CD14-positive monocyte (primary cell): ENCODE measurements at regions of chr17 and their contacts with region 1.

Region 1: DNA sequence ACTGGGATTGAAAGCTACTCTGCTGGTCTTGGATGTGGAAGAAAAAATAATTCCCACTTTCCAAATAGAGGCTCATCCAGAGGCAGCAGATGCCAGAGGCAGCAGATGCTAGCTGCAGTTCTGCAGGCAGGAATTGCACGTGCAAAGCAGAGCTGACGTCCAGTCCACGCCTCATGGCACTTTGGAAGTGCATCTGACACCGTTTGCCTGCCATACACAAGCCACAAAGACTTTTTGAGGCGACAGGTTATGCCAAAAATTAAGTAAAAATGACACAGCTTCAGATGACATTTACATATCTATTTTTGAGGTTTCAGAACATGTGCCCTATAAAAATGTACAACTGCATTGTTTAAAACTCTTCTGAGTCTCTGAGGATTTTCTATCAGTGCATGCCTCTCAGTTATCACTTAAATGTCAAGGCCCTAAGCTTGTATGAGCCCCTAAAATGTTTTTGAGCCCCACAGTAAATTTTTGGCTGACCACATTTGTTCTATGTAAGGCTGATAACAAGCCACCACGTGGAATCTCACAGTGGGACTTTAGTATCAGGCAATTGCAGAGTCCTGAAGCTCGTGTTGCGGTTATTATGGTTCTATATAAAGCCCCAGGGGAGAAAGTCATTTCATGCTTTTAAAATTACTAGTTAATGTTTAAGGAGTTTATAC is 239.2 kb downstream of the PRKCA start:
- DNase-seq: no peak
- H3K4me3 ChIP-seq: no peak overlapping the region
- H3K4me3 Mint-ChIP-seq: no peak overlapping the region
- H3K27ac ChIP-seq: no peak overlapping the region
- H3K27ac Mint-ChIP-seq: no peak overlapping the region
- H3K4me1 ChIP-seq: peaks cover 0 to 9% of the 10 kb centered on the region in 2 donors
- H3K4me1 Mint-ChIP-seq: peaks cover 27% of the 10 kb centered on the region
- H3K27me3 ChIP-seq: no peaks in the 10 kb centered on the region
- H3K27me3 Mint-ChIP-seq: peaks cover 0 to 1% (median 0%) of the 10 kb centered on the region in 3 donors
- CTCF ChIP-seq: no peak

Region 2: DNA sequence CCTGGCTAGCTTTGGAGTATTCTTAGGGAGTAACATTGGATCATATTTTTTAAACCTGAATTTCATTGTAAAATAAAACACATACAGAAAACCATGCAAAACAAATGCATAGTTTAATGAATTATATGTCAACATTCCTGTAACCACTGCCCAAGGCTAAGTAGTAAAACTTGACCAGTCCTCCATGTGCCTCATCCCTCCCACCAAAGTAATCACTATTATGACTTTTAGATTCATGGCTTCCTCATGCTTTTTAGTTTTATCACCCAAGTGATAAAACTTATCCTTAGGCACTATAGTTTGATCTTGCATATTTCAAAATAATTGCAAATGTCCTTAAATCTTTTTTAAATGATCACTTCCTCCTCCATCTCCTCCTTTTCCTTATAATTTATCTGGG is 218.8 kb before region 1 on chr17:
- intact Hi-C with region 1: loop called in 1 of 2 experiments (anchors 10 kb)
- DNase-seq: no peak
- H3K4me3 ChIP-seq: no peak overlapping the region
- H3K4me3 Mint-ChIP-seq: no peak overlapping the region
- H3K27ac ChIP-seq: no peak overlapping the region
- H3K27ac Mint-ChIP-seq: no peak overlapping the region
- H3K4me1 ChIP-seq: no peaks in the 10 kb centered on the region
- H3K4me1 Mint-ChIP-seq: peaks cover 2% of the 10 kb centered on the region
- H3K27me3 ChIP-seq: no peaks in the 10 kb centered on the region
- H3K27me3 Mint-ChIP-seq: no peaks in the 10 kb centered on the region
- CTCF ChIP-seq: no peak

Region 3: DNA sequence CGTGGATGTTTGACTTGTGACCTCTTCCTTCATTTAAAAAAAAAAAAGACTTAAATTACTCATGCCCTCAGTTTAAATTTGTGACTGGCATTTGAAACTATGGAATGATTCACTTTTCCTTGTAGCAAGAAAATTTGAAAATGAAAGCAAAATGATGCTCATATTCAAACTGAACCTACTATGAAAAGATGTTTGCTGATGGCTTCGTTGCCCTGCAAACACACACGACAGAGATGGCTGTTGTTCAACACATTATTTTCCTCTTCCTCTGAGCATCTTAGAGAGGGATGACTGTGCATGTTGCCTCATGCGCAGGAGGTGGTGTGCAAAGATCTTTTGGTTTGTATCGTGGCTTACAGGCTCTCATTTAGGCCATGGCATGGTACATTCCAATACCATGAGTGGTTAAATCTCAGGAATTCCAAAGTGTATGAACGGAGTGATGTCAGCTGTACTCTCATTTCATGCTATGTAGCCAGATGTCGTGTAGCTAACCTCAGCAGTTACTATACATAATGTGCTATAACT is 74.7 kb before region 1 on chr17:
- intact Hi-C with region 1: no loop called
- DNase-seq: peak; percentile 66 to 77 (median 71)
- H3K4me3 ChIP-seq: peak overlapping the region in 2 of 3 experiments; percentile 34 to 69
- H3K4me3 Mint-ChIP-seq: peak overlapping the region; percentile 27 to 60
- H3K27ac ChIP-seq: peak overlapping the region in 1 of 2 donors; percentile 79
- H3K27ac Mint-ChIP-seq: peak overlapping the region; percentile 70 to 92 (median 88)
- H3K4me1 ChIP-seq: peaks cover 83 to 90% of the 10 kb centered on the region in 2 donors
- H3K4me1 Mint-ChIP-seq: peaks cover 84% of the 10 kb centered on the region
- H3K27me3 ChIP-seq: no peaks in the 10 kb centered on the region
- H3K27me3 Mint-ChIP-seq: no peaks in the 10 kb centered on the region
- CTCF ChIP-seq: no peak